RWPE1 (cell line): ENCODE measurements at regions of chr15 and their contacts with region 1.

Region 1: DNA sequence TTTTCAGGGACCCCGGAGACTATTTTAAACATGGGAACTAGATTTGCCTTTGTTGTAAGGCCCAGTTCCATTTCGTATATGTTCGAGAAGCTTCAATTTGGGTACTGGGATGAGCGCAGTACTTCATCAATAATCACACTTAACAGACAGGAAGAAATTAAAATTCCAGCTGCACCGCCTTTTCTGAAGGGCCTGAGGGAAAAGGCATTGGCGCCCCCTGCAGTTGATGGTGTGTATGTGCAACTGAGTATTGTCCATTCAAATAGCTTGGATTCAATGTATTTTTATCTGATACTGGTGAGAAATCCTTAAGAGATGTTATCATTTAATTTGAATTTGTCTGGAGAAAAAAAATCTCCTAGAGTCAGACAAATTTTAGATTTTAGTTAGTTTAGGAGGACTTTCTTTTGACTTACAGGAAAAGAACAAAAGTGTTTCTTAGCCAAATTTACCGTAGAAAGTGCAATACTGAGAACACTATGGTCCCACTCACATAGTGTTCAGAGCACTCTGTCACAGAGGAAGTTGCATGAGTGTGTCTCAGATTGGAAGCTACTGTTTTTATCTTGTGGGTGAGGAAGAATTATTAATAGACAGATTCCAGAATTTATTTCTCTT is 5.4 kb upstream of the ALDH1A2 start:
- DNase-seq: peak; percentile 41
- H3K27ac ChIP-seq: no peak overlapping the region
- CTCF ChIP-seq: peak; percentile 98

Region 2: DNA sequence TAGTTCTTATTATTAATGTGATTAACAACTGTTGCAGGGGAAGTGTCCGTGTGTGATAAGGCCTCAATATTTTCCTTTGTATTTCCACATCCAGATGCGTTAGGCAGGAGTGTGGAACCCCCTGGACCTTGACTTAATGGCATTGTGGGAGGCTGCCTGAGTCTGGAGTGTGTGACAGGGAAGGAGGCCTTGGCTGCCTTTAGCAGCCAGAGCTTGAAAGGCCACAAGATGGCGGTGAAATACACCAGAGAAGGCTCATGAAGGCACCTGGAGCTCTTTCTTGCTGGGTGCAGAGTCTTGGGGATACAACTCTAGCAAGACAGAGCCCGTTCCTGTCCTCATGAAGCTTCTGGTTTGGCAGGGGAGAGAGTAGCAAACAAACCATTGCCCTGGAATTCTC is 327.5 kb before region 1 on chr15:
- CTCF ChIA-PET with region 1: interaction called, 11 read pairs
- POLR2A ChIA-PET with region 1: no interaction called
- DNase-seq: no peak
- H3K27ac ChIP-seq: no peak overlapping the region
- CTCF ChIP-seq: no peak

Region 3: GRCh38 chr15:57861036-57861638 is 209.8 kb before region 1 on chr15:
- CTCF ChIA-PET with region 1: interaction called, 30 read pairs
- POLR2A ChIA-PET with region 1: no interaction called
- DNase-seq: peak; percentile 38
- H3K27ac ChIP-seq: no peak overlapping the region
- CTCF ChIP-seq: peak; percentile 88

Region 4: GRCh38 chr15:57872281-57873030 is 198.5 kb before region 1 on chr15:
- CTCF ChIA-PET with region 1: interaction called, 30 read pairs
- POLR2A ChIA-PET with region 1: no interaction called
- DNase-seq: no peak
- H3K27ac ChIP-seq: no peak overlapping the region
- CTCF ChIP-seq: no peak

Region 5: DNA sequence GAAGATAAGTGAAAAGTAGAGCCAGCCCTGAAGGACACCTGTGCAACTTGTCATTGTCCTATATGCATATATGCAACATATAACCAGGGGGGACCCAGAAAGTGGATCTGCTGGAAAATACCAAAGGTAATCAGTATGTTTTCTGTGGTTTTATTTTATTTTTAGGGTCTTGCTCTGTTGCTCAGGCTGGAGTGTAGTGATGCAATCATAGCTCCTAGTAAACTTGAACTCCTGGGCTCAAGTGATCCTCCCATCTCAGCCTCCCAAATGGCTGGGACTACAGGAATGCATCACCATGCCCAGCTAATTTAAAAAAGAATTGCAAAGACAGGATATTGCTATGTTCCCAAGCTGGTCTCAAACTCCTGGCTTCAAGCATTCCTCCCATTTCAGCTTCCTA is 12.6 kb after region 1 on chr15:
- CTCF ChIA-PET with region 1: interaction called, 10 read pairs
- POLR2A ChIA-PET with region 1: no interaction called
- DNase-seq: no peak
- H3K27ac ChIP-seq: no peak overlapping the region
- CTCF ChIP-seq: no peak